HAP-1 (cell line): ENCODE measurements at regions of chr20 and their contacts with region 1.

Region 1: DNA sequence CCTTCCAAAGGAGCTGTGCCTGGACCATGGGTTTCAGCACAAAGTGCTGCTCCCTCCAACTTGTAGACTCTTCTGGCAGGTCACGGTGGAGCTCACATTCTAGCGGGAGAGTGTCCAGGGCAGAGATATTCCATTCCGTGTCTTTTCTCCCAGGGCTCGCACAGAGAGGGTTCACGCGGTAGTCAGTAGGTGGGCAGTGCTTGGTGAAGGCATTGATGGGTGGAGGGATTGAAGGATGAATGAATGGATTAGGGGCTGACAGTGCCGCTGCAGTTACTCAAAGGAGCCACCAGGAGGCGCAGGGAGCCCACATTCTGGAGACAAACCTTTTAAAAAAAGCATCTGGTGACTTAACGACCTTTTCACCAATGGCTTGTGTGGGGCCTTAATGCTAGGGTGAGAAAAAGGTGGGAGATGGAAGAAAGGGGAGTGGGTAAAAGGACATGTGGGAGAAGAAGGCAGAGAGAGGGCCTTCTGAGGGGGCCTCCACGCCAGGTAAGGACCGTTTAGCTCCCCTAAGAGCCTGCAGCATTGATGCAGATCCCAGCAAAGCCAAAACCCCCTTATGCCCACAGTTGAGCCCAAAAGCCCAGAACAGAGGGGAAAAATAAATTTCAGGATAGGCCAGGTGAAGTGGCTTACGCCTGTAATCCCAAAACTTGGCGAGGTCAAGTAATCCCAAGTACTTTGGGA is 17.5 kb upstream of the FAM110A start:
- DNase-seq: peak; percentile 64 to 75
- H3K4me3 ChIP-seq: no peak overlapping the region
- H3K4me1 ChIP-seq: no peaks in the 10 kb centered on the region
- H3K27me3 ChIP-seq: no peaks in the 10 kb centered on the region; the same call in 1 of the 2 replicates

Region 2: DNA sequence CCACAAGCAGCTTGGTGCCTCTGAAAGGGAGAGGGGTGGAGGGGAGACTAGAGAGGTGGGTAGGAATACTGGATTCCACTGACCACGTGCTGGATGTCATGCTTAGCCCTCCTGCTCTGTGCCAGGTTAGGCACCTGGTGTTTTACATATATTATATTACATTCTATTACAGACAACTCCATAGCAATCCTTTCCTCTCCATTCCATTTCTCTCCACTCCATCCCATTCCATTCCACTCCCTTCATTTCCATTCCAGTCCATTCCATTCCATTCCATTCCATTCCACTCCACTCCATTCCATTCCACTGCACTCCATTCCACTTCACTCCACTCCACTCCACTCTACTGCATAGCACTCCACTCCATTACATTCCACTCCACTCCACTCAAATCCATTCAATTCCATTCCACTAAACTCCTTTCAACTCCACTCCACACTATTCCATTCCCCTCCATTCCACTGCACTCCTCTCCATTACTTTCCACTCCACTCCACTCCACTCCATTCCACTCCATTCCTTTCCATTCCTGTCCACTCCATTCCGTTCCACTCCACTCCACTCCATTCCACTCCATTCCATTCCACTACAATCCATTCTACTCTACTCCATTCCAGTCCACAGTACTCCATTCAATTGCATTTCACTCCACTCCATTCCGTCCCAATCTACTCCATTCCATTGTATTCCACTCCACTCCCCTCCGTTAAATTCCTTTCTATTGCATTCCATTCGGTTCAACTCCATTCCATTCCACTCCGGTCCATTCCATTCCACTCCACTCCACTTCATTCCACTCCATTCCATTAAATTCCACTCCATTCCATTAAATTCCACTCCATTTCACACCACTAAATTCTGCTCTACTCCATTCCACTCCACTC is 755.8 kb before region 1 on chr20:
- in situ Hi-C with region 1: no loop called
- DNase-seq: no peak
- H3K4me3 ChIP-seq: no peak overlapping the region
- H3K4me1 ChIP-seq: no peaks in the 10 kb centered on the region
- H3K27me3 ChIP-seq: no peaks in the 10 kb centered on the region

Region 3: DNA sequence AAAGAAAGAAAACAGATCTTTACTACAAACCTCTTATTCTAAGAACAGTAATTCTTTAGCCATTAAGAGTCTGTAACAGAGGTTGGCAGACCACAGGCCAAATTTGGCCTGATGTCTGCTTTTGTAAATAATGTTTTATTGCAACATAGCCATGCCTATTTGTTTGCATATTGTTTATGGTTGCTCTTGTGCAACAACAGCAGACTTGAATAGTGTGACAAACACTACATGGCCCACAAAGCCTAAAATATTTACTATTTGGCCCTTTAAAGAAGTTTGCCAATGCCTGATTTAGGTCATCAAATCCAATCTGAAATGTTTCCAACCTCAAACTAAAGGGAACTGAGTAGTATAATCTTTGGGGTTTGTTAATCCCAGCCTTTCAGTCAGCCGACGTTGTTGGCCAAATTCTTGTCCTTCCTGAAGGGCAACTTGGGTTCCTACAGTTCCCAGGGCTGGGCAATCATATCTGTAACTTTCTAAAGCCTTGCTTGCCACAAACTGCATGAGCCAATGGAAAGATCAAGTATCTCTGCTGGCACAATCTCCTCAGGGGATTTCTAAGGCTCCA is 319.8 kb before region 1 on chr20:
- in situ Hi-C with region 1: no loop called
- DNase-seq: no peak
- H3K4me3 ChIP-seq: no peak overlapping the region
- H3K4me1 ChIP-seq: no peaks in the 10 kb centered on the region
- H3K27me3 ChIP-seq: no peaks in the 10 kb centered on the region

Region 4: GRCh38 chr20:956330-956951 is 140.4 kb after region 1 on chr20:
- in situ Hi-C with region 1: loop called (anchors 5 kb)
- DNase-seq: peak; percentile 57 to 83
- H3K4me3 ChIP-seq: no peak overlapping the region
- H3K4me1 ChIP-seq: no peaks in the 10 kb centered on the region
- H3K27me3 ChIP-seq: peaks cover 20% of the 10 kb centered on the region; the same call in 1 of the 2 replicates

Region 5: GRCh38 chr20:1108437-1108920 is 292.4 kb after region 1 on chr20:
- in situ Hi-C with region 1: loop called (anchors 10 kb)
- DNase-seq: peak; percentile 17 to 69
- H3K4me3 ChIP-seq: no peak overlapping the region
- H3K4me1 ChIP-seq: no peaks in the 10 kb centered on the region
- H3K27me3 ChIP-seq: no peaks in the 10 kb centered on the region

Region 6: GRCh38 chr20:1199212-1199873 is 383.3 kb after region 1 on chr20:
- in situ Hi-C with region 1: no loop called
- DNase-seq: no peak
- H3K4me3 ChIP-seq: no peak overlapping the region
- H3K4me1 ChIP-seq: no peaks in the 10 kb centered on the region
- H3K27me3 ChIP-seq: no peaks in the 10 kb centered on the region; the same call in 1 of the 2 replicates

Region 7: GRCh38 chr20:1212607-1213396 is 396.7 kb after region 1 on chr20:
- in situ Hi-C with region 1: loop called (anchors 5 kb)
- DNase-seq: peak; percentile 37 to 79
- H3K4me3 ChIP-seq: no peak overlapping the region
- H3K4me1 ChIP-seq: no peaks in the 10 kb centered on the region
- H3K27me3 ChIP-seq: peaks cover 23% of the 10 kb centered on the region